Endothelial cell of umbilical vein (primary cell): ENCODE measurements at regions of chr5 and their contacts with region 1.

Region 1: GRCh38 chr5:115634343-115635132 is 8.7 kb upstream of the TMED7 start:
- DNase-seq: peak; percentile 78
- H3K4me3 ChIP-seq: peak overlapping the region in 2 of 3 experiments; percentile 21 to 55
- H3K27ac ChIP-seq: no peak overlapping the region
- H3K4me1 ChIP-seq: peaks cover 5% of the 10 kb centered on the region
- H3K27me3 ChIP-seq: peaks cover 2 to 5% of the 10 kb centered on the region in 2 experiments
- CTCF ChIP-seq: peak; percentile 75 to 89
- POLR2A ChIP-seq: no peak

Region 2: GRCh38 chr5:115656404-115656803 is 21.9 kb after region 1 on chr5:
- CTCF ChIA-PET with region 1: no interaction called
- POLR2A ChIA-PET with region 1: no interaction called
- dilution Hi-C with region 1: no loop called
- intact Hi-C with region 1: no loop called
- DNase-seq: no peak
- H3K4me3 ChIP-seq: no peak overlapping the region
- H3K27ac ChIP-seq: no peak overlapping the region
- H3K4me1 ChIP-seq: no peaks in the 10 kb centered on the region
- H3K27me3 ChIP-seq: no peaks in the 10 kb centered on the region
- CTCF ChIP-seq: no peak
- POLR2A ChIP-seq: no peak

Region 3: GRCh38 chr5:115686051-115686737 is 51.7 kb after region 1 on chr5:
- CTCF ChIA-PET with region 1: no interaction called
- POLR2A ChIA-PET with region 1: no interaction called
- dilution Hi-C with region 1: no loop called
- intact Hi-C with region 1: no loop called
- DNase-seq: no peak
- H3K4me3 ChIP-seq: no peak overlapping the region
- H3K27ac ChIP-seq: no peak overlapping the region
- H3K4me1 ChIP-seq: no peaks in the 10 kb centered on the region
- H3K27me3 ChIP-seq: peaks cover 4 to 8% of the 10 kb centered on the region in 2 experiments
- CTCF ChIP-seq: no peak
- POLR2A ChIP-seq: no peak

Region 4: GRCh38 chr5:115816226-115817081 is 181.9 kb after region 1 on chr5 and contains the start of gene CDO1:
- CTCF ChIA-PET with region 1: interaction called, 11 read pairs
- POLR2A ChIA-PET with region 1: no interaction called
- dilution Hi-C with region 1: no loop called
- intact Hi-C with region 1: no loop called
- DNase-seq: peak; percentile 53
- H3K4me3 ChIP-seq: peak within 1 kb of the TSS; percentile 6 to 40 (median 24)
- H3K27ac ChIP-seq: no peak within 1 kb of the TSS
- H3K4me1 ChIP-seq: peaks cover 6% of the 10 kb centered on the region
- H3K27me3 ChIP-seq: peaks cover 27 to 38% of the 10 kb centered on the region in 2 experiments
- CTCF ChIP-seq: no peak
- POLR2A ChIP-seq: no peak
- total RNA-seq, gene CDO1: 1.3 and 1.7 TPM in 2 replicates

Region 5: GRCh38 chr5:115831163-115831768 is 196.7 kb after region 1 on chr5:
- CTCF ChIA-PET with region 1: interaction called, 54 read pairs
- POLR2A ChIA-PET with region 1: no interaction called
- dilution Hi-C with region 1: no loop called
- intact Hi-C with region 1: loop called (anchors 1 kb)
- DNase-seq: peak; percentile 51
- H3K4me3 ChIP-seq: no peak overlapping the region
- H3K27ac ChIP-seq: no peak overlapping the region
- H3K4me1 ChIP-seq: no peaks in the 10 kb centered on the region
- H3K27me3 ChIP-seq: no peaks in the 10 kb centered on the region
- CTCF ChIP-seq: peak; percentile 66 to 68
- POLR2A ChIP-seq: no peak

Region 6: GRCh38 chr5:116032094-116032517 is 397.6 kb after region 1 on chr5 and contains the start of gene ARL14EPL:
- CTCF ChIA-PET with region 1: interaction called, 13 read pairs
- POLR2A ChIA-PET with region 1: no interaction called
- dilution Hi-C with region 1: no loop called
- intact Hi-C with region 1: loop called (anchors 1 kb)
- DNase-seq: peak; percentile 98
- H3K4me3 ChIP-seq: peak within 1 kb of the TSS in 1 of 3 experiments; percentile 33
- H3K27ac ChIP-seq: peak within 1 kb of the TSS; percentile 45
- H3K4me1 ChIP-seq: peaks cover 14% of the 10 kb centered on the region
- H3K27me3 ChIP-seq: no peaks in the 10 kb centered on the region
- CTCF ChIP-seq: peak; percentile 34 to 49
- POLR2A ChIP-seq: no peak
- total RNA-seq, gene ARL14EPL: 0.58 TPM in 1 of 2 replicates, not detected in the other

Region 7: DNA sequence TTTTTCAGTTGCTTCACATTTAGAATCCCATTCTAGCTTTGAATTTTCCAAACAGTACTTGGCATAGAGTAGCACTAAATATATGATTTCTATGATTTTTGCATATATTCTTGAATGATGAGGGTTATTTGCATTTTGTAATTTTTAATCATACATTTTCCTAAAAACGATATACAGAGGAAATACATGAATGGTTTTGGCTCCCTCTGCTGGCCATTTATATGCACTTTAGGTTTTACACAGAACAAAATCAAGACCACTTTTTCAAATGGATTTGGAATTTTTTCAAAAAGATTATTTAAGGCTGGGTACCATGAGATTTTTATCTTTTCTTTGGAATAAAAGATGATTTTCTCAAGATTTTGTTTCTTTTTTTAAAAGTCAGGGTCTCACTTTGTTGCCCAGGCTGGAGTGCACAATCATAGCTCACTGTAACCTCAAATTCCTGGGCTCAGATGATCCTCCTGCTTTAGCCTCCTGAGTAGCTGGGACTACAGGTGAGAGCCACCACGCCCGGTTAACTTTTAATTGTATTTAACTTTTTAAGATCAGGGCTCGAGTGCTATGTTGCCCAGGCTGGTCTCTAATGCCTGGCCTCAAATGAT is 433.6 kb after region 1 on chr5:
- CTCF ChIA-PET with region 1: interaction called, 43 read pairs
- POLR2A ChIA-PET with region 1: no interaction called
- dilution Hi-C with region 1: no loop called
- intact Hi-C with region 1: loop called (anchors 1 kb)
- DNase-seq: peak; percentile 61
- H3K4me3 ChIP-seq: no peak overlapping the region
- H3K27ac ChIP-seq: no peak overlapping the region
- H3K4me1 ChIP-seq: no peaks in the 10 kb centered on the region
- H3K27me3 ChIP-seq: peaks cover 0 to 7% of the 10 kb centered on the region in 2 experiments
- CTCF ChIP-seq: peak; percentile 43 to 51
- POLR2A ChIP-seq: no peak